Activated naive CD8-positive, alpha-beta T cell treated with anti-CD3 and anti-CD28 coated beads, Interleukin-2, amount 10 ng/mL, durations not matched to agents 7 days and 5 days (primary cell): ENCODE measurements at regions of chr11 and their contacts with region 1.

Region 1: DNA sequence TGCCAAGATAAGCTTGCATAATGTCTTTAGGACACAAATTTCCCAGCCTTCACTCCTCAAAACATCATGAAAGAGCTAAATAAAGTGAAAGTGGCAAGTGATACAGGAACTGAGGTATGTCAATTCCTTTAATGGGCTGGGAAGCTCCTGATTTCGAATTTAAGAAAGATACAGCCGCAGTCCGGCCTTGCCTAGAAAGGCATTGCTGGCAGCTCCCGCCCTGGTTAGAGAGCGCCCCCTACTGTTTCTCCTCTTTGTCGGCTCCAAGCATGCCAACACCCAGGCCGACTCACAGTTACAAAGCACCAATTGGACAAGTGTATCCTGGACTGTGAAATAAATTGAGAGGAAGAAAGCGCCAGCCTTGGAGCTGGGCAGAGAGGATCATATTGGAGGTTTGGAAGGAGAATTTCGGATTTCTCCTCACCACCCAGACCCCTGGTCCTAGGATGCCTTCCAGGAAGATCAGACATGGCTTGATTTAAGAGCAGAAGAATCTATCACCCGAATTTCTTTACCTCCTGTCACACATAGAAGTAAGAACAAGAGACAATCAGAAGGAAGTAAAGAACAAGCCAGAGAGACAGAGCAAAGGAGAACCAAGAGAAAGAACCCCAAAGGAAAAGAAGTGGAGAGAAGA is 84.0 kb downstream of the FAM76B start:
- DNase-seq: peak; percentile 76
- ATAC-seq: peak; percentile 90
- H3K4me3 Mint-ChIP-seq: no peak overlapping the region
- H3K27ac Mint-ChIP-seq: no peak overlapping the region
- H3K4me1 Mint-ChIP-seq: peaks cover 12% of the 10 kb centered on the region
- H3K27me3 Mint-ChIP-seq: no peaks in the 10 kb centered on the region

Region 2: DNA sequence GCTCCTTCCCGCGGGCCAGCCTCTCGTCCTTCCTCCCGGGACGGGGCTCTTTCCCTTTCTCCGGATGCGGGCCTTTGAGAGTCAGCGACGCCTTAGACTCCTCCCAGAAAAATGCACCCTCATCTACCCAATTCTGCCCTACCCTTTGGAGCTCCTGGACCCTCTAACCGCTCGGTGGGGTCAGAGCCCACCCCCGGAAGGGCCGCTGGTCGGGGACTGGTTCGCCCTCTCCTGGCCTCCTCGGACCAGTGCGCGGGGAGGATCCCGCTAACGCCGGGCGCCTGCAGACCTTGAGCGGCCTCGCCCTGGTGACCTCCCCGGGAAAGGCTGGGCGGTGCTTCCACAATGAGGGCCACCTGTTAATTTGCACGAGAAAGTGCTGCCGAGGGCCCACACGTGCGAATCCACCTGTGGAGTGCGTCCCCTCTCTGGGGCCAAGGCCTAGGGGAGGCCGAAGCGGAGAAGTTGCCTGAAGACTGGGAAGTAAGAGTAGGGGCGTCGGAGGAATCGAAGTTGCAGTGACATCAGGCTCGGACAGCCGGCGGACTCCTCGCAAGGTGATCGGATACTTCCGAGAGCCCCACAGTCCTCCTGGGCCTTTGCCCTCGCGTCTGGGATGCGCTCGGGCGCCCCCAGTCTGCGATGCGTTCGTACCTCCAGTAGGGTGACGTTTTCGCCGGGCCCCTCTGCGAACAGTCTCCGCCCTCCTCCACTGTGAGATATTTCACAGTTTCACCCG is 554.5 kb before region 1 on chr11:
- POLR2A ChIA-PET with region 1: interaction called, 12 read pairs
- DNase-seq: peak; percentile 88
- ATAC-seq: peak; percentile 93
- H3K4me3 Mint-ChIP-seq: peak overlapping the region; percentile 89
- H3K27ac Mint-ChIP-seq: peak overlapping the region; percentile 89
- H3K4me1 Mint-ChIP-seq: peaks cover 34% of the 10 kb centered on the region
- H3K27me3 Mint-ChIP-seq: peaks cover 6% of the 10 kb centered on the region

Region 3: DNA sequence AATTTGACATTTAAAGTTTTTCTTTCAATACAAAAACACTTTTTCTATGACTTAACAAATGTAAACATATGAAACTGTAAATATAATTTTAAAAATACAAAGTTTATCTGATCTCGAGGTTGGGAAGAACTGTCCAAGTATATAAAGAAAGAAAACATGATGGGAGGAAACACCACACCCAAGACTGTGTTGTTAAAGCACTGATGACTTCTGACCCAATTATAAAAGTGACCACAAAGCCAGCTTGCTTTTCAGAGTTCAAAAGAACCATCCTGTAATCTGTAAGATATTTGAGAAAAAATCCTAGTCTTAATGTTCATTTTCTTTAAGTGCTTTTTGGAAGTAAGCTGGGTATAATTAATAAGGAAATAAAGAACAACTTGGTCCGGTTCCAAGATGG is 100.3 kb after region 1 on chr11:
- POLR2A ChIA-PET with region 1: no interaction called
- DNase-seq: no peak
- ATAC-seq: no peak
- H3K4me3 Mint-ChIP-seq: no peak overlapping the region
- H3K27ac Mint-ChIP-seq: no peak overlapping the region
- H3K4me1 Mint-ChIP-seq: peaks cover 1% of the 10 kb centered on the region
- H3K27me3 Mint-ChIP-seq: no peaks in the 10 kb centered on the region